Colonic mucosa (tissue), 4 donors: ENCODE measurements at regions of chr1 and their contacts with region 1.

Region 1: GRCh38 chr1:7667625-7668218 is 103.4 kb upstream of the VAMP3 start:
- DNase-seq: peak; percentile 90
- H3K4me3 ChIP-seq: no peak overlapping the region
- H3K27ac ChIP-seq: no peak overlapping the region
- H3K4me1 ChIP-seq: no peaks in the 10 kb centered on the region
- H3K27me3 ChIP-seq: no peaks in the 10 kb centered on the region
- CTCF ChIP-seq: peak; percentile 99

Region 2: GRCh38 chr1:7752512-7753417 is 85.0 kb after region 1 on chr1:
- intact Hi-C with region 1: loop called (anchors 2 kb)
- DNase-seq: peak; percentile 65
- H3K4me3 ChIP-seq: no peak overlapping the region
- H3K27ac ChIP-seq: no peak overlapping the region
- H3K4me1 ChIP-seq: no peaks in the 10 kb centered on the region
- H3K27me3 ChIP-seq: no peaks in the 10 kb centered on the region
- CTCF ChIP-seq: peak; percentile 74